Common myeloid progenitor, CD34-positive (primary cell): ENCODE measurements at regions of chr3 and their contacts with region 1.

Region 1: DNA sequence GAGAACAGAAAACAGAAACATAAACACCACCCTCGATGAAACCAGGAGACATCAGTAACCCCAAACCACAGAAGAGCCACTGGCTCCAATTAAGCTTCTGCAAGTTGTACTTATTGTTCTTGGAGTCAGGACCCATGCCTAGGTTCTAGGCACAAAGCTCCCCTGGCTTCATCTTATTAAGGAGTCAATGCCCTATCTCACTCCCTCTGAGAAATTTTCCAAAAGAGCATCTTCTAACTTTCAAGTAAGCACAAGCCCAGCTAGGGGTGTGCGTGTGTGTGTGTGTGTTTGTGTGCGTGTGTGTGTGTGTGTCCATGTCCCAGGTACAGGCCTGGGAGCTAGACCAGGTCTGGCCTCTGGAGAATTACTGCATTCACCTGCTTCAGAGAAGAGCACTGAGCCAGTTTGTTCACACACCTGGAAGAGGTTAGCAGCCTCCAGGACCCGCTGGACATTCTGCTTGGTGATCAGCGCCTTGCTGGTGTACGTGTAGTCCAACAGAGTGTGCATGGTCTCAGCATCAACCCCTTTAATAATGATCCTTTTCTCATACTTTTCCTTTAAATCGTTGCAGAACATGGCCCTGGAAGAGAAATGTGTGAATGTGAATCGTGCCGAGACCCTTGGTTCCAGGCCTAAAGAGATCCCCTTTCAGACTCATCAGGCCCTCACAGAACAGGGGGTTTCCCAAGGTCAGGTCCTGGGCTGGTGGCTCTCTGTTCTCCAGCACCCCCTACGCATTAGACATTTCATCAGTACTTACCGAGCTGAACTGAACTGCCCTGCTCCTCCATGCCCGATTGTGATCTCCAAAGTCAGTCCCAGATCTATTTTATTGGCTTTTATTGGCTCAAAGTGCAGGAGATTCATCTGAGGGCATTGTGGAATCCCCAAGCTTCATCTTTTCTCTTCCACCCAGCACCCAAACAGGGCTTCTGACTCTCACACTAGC is 27.8 kb downstream of the KLHL6 start:
- DNase-seq: peak in 2 of 3 donors; percentile 40 to 46
- H3K4me3 ChIP-seq: no peak overlapping the region
- H3K27ac ChIP-seq: no peak overlapping the region
- H3K4me1 ChIP-seq: peaks cover 0 to 13% (median 9%) of the 10 kb centered on the region in 4 experiments
- H3K27me3 ChIP-seq: no peaks in the 10 kb centered on the region

Region 2: DNA sequence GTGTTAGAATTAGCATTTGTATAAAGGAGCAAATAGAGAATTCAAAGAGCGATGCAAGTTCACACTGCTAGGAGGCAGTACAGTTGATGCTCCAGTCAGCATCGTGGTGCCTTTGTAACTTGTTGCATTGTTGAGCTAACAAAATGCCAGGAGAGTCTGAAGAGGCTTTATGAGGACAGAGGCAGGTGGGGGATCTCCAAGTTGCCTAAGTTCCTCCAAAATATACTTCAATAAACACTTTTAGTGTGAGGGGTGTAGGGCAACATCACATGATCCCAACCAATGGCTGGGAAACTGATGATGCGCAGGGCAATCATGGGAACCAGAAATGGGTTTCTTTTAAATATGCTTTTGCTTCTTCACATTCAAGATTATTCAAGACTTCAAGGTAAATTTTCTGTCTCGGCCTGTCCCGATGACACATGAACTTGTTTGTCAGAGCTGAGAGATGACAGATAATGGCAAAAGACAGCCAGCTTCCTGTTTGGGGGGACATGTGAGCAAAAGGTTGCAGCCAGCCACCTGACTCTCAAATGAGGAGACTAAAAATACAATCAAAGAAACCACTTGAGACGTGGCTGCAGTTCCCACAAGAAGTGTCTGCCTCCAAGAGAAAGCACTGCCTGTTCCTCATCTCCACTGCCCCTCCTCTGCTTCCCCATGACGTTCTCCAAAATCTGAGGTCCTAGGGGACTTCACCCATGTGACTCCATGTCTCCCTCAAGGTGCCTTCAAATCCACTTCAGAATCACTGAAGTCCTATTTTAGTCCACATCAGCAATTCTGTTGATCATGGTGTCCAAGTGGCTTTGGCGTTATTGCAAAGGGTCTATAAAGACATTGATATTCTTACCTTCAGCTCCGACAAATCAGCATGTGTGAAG is 11.5 kb before region 1 on chr3:
- CTCF ChIA-PET with region 1: interaction called, 13 read pairs
- POLR2A ChIA-PET with region 1: no interaction called
- DNase-seq: peak; percentile 24 to 81 (median 71)
- H3K4me3 ChIP-seq: peak overlapping the region in 1 of 7 experiments; percentile 0
- H3K27ac ChIP-seq: peak overlapping the region in 1 of 2 experiments; percentile 17
- H3K4me1 ChIP-seq: peaks cover 25 to 57% (median 51%) of the 10 kb centered on the region in 4 experiments
- H3K27me3 ChIP-seq: no peaks in the 10 kb centered on the region

Region 3: GRCh38 chr3:183629546-183630301 is 102.0 kb after region 1 on chr3:
- CTCF ChIA-PET with region 1: no interaction called
- POLR2A ChIA-PET with region 1: no interaction called
- DNase-seq: no peak
- H3K4me3 ChIP-seq: no peak overlapping the region
- H3K27ac ChIP-seq: no peak overlapping the region
- H3K4me1 ChIP-seq: peaks cover 0 to under 1% (median 0%) of the 10 kb centered on the region in 4 experiments
- H3K27me3 ChIP-seq: no peaks in the 10 kb centered on the region